MCF 10A (cell line): ENCODE measurements at regions of chr5 and their contacts with region 1.

Region 1: GRCh38 chr5:14097998-14098471 is 45.1 kb upstream of the TRIO start:
- DNase-seq: no peak
- H3K4me3 Mint-ChIP-seq: no peak overlapping the region
- H3K27ac Mint-ChIP-seq: no peak overlapping the region
- H3K4me1 Mint-ChIP-seq: no peaks in the 10 kb centered on the region
- H3K27me3 Mint-ChIP-seq: no peaks in the 10 kb centered on the region
- CTCF ChIP-seq: no peak

Region 2: DNA sequence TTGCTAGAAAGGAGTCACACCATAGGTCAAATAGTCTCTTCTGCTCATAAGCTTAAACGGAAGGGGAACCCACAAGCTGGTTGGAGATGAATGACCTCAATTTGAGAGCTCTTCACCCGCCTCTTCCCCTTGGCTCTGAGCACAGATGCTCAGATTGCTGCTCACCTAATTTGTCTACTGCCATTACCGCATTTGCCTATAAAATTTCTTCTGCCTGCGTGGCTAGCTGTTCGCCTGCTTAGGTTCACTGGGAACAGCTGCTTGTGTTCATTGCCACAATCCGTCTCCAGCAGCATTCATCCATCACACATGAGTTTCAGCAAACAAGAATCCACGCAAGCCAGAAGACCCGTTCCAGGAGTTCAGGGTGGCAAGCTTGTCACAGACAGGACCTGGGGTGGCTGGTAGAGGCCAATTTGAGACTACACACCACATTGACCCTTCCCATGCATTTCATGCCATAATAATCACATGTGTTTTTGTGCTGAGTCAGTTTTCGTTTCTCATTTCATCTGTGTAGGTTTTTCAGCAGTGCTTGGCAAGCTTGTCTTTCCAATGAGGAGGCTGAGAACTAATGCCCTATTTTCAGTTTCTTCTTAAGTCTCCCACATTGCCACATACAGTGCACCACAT is 103.3 kb before region 1 on chr5:
- CTCF ChIA-PET with region 1: no interaction called
- POLR2A ChIA-PET with region 1: no interaction called
- intact Hi-C with region 1: loop called (anchors 10 kb)
- DNase-seq: no peak
- H3K4me3 Mint-ChIP-seq: no peak overlapping the region
- H3K27ac Mint-ChIP-seq: no peak overlapping the region
- H3K4me1 Mint-ChIP-seq: no peaks in the 10 kb centered on the region
- H3K27me3 Mint-ChIP-seq: no peaks in the 10 kb centered on the region
- CTCF ChIP-seq: no peak